PC-9 (cell line): ENCODE measurements at regions of chr11 and their contacts with region 1.

Region 1: GRCh38 chr11:130246270-130246669 is 68.4 kb downstream of the ZBTB44 start:
- DNase-seq: no peak
- H3K4me3 ChIP-seq: no peak overlapping the region
- H3K27ac ChIP-seq: no peak overlapping the region
- H3K4me1 ChIP-seq: no peaks in the 10 kb centered on the region
- H3K27me3 ChIP-seq: no peaks in the 10 kb centered on the region
- CTCF ChIP-seq: no peak

Region 2: DNA sequence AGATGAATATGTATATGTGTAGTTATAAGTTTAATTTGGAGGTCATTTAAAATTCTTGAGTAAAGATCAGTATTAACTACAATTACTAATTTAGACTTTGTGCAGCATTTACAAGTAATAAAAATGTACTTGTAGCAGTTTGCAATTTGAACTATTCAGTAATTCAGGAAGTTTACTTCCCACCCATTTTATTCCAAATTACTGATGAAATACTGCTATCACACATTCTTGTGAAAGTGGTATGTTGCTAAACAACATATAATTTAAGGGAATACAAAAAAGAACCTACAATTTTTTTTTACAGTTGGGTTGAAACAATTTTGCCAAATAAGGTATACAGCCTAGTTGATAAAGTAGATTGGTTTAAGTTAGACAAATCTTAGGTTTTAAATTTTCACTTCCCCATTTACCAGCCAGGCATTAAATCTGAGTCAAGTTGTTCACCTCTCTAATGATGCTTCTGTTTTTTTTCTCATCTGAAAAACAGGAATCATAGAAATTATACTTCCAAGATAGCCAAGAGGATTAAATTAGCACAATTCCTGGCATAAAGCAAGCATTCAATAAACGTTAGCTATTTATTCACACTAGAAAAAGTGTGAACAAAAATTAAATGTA is 23.2 kb after region 1 on chr11:
- CTCF ChIA-PET with region 1: interaction called, 10 read pairs
- POLR2A ChIA-PET with region 1: no interaction called
- intact Hi-C with region 1: no loop called
- DNase-seq: no peak
- H3K4me3 ChIP-seq: no peak overlapping the region
- H3K27ac ChIP-seq: no peak overlapping the region
- H3K4me1 ChIP-seq: no peaks in the 10 kb centered on the region
- H3K27me3 ChIP-seq: no peaks in the 10 kb centered on the region
- CTCF ChIP-seq: no peak

Region 3: DNA sequence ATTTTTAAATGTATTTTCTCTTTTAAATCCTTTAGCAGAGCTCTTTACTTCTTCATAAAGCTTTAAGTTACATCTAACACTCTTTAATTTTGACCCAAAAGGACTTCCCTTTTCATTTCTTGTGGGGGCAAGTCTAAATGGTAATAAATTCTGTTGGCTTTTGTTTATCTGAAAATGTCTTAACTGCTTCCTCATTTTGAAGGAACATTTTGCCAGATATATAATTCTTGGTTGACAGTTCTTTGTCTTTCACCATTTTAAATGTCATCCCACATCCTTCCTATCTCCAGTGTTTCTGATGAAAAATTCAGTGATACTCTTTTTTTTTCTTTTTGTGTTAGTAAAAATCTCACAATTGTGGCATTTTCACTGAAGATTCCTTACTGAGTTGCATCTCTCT is 113.1 kb after region 1 on chr11:
- CTCF ChIA-PET with region 1: no interaction called
- POLR2A ChIA-PET with region 1: interaction called, 10 read pairs
- intact Hi-C with region 1: no loop called
- DNase-seq: no peak
- H3K4me3 ChIP-seq: no peak overlapping the region
- H3K27ac ChIP-seq: no peak overlapping the region
- H3K4me1 ChIP-seq: no peaks in the 10 kb centered on the region
- H3K27me3 ChIP-seq: 0 out of 2 replicates have a peak, but pooled peaks cover 3% of the 10 kb centered on the region
- CTCF ChIP-seq: no peak

Region 4: DNA sequence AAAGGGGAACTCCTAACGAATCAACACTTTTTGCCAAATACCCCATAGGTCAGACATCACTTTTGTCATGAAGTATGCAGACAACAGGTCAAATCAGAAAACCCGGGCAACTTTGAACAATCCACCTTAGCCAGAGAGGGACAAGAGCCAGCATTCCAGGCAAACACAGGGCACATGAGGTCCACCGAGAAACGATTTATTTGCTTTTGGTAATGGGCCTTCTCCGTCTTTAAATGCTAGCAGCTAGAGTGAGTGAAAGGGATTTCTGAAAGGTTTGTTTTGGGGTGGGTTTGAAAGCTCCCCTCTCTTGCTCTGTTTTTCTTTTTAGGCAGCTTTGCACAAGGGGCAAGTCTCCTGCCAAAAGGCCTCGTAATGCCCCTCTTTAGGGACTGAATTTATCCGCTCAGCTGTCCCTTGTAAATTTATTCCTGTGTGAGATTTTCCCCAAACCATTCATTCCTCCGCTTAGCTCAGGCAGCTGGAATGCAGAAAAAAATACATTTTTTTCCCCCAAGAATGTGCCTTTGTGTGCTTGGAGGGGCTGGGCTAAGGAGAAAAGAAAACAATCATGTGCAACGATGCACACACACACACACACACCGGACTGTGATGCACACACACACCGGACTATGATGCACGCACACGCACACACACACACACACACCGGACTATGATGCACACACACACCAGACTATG is 473.1 kb after region 1 on chr11:
- CTCF ChIA-PET with region 1: no interaction called
- POLR2A ChIA-PET with region 1: no interaction called
- intact Hi-C with region 1: no loop called
- DNase-seq: no peak
- H3K4me3 ChIP-seq: no peak overlapping the region
- H3K27ac ChIP-seq: no peak overlapping the region
- H3K4me1 ChIP-seq: no peaks in the 10 kb centered on the region
- H3K27me3 ChIP-seq: no peaks in the 10 kb centered on the region
- CTCF ChIP-seq: no peak

Region 5: DNA sequence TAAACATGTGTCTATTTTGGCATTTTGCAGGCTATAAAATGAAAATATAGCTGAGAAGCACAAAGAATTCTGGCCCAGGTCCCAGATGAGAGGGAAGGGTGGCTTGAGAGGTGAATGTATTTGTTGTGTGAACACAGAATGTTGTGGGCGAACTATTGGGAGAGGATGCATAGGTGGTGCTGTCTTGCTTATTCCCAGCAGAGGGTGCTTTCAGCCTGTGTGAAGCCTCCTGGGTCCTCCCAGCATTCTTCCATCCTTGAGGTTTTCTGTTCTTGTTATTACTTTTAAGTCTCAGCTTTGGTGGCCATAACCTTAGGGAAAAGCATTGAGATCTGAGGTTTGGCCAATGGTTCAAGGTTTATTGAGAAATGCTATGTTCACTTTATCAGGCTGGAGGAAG is 778.8 kb after region 1 on chr11:
- CTCF ChIA-PET with region 1: no interaction called
- POLR2A ChIA-PET with region 1: no interaction called
- intact Hi-C with region 1: no loop called
- DNase-seq: peak in 1 of 2 experiments; percentile 17
- H3K4me3 ChIP-seq: no peak overlapping the region
- H3K27ac ChIP-seq: no peak overlapping the region
- H3K4me1 ChIP-seq: no peaks in the 10 kb centered on the region
- H3K27me3 ChIP-seq: no peaks in the 10 kb centered on the region
- CTCF ChIP-seq: peak; percentile 78